ENCODE measurements at regions of chr12 and their contacts with region 1.

Region 1: GRCh38 chr12:79935021-79935623 is at the start of gene PPP1R12A:
- DNase-seq: peak; percentile 99
- ATAC-seq: peak; percentile 99
- H3K4me3 ChIP-seq: peak within 1 kb of the TSS; percentile 80 to 97
- H3K27ac ChIP-seq: peak within 1 kb of the TSS; percentile 91 to 96
- H3K4me1 ChIP-seq: peaks cover 0 to 2% of the 10 kb centered on the region in 2 donors
- H3K27me3 ChIP-seq: no peaks in the 10 kb centered on the region
- total RNA-seq, gene PPP1R12A: 194 to 287 TPM

Region 2: DNA sequence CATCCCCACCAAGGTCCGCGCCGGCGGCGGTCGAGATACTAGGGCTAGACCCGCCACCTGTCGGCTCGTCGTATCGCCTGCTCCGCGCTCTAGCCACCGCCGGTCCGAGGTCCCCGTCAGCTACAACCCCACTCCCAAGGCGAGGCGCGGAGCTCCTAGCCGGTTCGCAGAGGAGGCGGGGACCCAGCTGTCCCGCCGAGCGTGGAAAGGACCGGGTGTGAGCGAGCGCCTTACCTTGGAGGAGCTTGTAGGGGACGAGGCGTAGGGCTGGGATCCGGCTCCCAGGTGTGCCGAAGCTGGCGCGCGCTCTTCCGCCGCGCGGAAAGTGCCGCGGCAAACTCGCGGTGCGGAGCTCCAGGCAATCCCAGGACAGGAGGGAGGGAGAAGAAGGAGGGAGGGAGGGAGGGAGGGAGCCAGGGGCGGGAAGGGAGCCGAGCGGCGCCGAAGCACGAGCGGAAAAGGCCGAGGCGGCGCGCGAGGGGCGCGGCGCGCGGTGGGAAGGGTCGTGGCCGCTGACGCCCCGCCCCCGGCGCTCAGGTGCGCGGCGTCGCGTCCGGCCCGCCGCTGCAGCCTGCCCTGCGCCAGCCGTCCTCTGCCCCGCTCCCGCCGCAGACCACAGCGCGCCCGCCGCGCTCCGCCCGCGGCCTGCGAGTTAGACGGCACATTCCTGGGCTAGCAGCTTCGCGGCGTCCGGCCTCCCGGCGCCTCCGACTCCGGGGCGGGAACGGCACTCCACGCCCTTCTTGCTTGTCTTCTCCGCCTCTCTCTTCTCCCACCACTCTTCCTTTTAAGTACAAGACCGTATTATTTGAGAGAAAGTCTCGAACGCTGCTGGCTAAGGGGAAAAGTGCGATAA is 244.3 kb before region 1 on chr12 and contains the start of gene PAWR:
- intact Hi-C with region 1: loop called in 1 of 2 experiments (anchors 10 kb)
- DNase-seq: peak; percentile 73 to 90
- ATAC-seq: peak; percentile 88
- H3K4me3 ChIP-seq: peak within 1 kb of the TSS; percentile 96 to 99
- H3K27ac ChIP-seq: peak within 1 kb of the TSS; percentile 71 to 96
- H3K4me1 ChIP-seq: peaks cover 0 to 4% of the 10 kb centered on the region in 2 donors
- H3K27me3 ChIP-seq: no peaks in the 10 kb centered on the region
- total RNA-seq, gene PAWR: 110 to 150 TPM

Region 3: DNA sequence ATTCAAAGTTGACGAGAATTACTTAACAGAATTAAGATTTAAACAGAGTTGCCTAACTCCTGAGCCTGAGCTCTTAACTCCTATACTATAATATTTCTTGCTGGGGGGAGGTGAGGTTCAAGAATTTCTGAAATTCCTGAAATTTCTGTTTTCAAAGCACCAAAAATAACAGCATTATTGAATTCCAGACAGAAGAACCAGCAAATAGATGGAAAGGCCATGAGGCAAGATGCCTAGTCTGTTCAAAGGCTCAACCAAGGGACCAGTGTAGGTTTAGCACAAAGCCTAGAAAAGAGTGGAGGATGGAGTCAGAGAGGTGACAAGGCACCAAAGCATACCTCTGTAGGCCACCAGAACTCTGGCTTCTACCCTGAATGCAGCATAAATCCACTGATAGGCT is 76.6 kb before region 1 on chr12:
- intact Hi-C with region 1: no loop called
- DNase-seq: no peak
- ATAC-seq: no peak
- H3K4me3 ChIP-seq: no peak overlapping the region
- H3K27ac ChIP-seq: no peak overlapping the region
- H3K4me1 ChIP-seq: peaks cover 0 to 2% of the 10 kb centered on the region in 2 donors
- H3K27me3 ChIP-seq: no peaks in the 10 kb centered on the region

Region 4: GRCh38 chr12:79886917-79887519 is 48.1 kb before region 1 on chr12:
- intact Hi-C with region 1: loop called in 1 of 2 experiments (anchors 10 kb)
- DNase-seq: no peak
- ATAC-seq: peak; percentile 74
- H3K4me3 ChIP-seq: no peak overlapping the region
- H3K27ac ChIP-seq: no peak overlapping the region
- H3K4me1 ChIP-seq: peaks cover 8% of the 10 kb centered on the region in 2 donors
- H3K27me3 ChIP-seq: no peaks in the 10 kb centered on the region

Region 5: DNA sequence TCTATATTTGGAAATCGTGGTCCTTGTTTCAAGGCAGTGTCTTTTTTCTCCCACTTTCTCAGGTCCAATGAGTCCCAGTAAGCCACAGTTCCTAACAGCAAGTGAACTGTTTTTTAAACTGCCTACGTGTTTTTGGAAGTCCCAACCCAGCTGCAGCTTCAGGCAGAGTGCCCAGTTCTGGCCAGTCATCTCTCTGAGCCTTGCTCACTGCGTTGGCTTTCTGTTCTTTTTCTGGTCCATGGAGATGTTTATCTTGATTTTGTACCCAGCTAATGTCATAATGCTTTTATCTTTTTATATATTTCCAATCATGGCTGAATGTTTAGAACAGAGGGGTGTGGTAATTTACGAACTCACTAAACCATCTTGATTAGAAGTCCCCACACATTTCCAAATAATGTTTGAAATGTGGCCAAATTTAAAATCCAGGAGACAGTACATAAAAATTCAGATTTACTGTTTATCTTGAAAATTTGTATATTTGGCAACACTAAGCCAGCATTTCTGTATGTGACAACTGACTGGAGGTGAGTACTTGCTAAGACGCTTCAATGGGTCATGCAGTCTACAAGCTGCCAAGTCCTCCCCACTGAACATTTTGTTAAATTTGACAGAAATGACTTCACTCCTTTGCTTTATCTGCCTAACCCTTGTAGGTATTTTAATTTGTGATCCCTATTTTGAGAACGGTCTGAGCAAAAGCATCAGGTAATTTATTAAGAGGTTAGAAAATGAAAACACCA is 118.1 kb after region 1 on chr12:
- intact Hi-C with region 1: loop called (anchors 2 to 5 kb)
- DNase-seq: peak; percentile 91 to 93
- ATAC-seq: peak; percentile 86
- H3K4me3 ChIP-seq: peak overlapping the region in 1 of 2 donors; percentile 15
- H3K27ac ChIP-seq: peak overlapping the region in 1 of 2 donors; percentile 57
- H3K4me1 ChIP-seq: no peaks in the 10 kb centered on the region
- H3K27me3 ChIP-seq: no peaks in the 10 kb centered on the region

Region 6: DNA sequence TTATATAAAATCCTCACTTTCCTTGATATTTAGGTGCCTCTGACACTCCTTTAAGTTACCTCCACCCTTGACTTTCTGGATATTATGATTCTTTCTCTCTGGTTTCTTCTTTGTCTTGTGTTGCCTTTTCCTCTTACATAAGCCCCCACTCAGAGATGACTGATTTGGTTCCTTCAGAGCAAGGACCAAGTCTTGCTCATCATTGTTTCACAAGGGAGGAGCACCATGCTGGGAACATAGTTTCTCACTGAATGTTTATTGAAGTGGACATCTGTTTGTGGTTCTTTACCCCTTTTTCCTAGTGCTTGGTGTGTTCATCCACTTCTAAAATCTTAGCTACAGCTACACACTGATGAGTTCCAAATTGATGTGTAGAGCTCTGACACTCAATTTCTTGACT is 347.6 kb after region 1 on chr12:
- intact Hi-C with region 1: no loop called
- DNase-seq: no peak
- ATAC-seq: no peak
- H3K4me3 ChIP-seq: no peak overlapping the region
- H3K27ac ChIP-seq: no peak overlapping the region
- H3K4me1 ChIP-seq: no peaks in the 10 kb centered on the region
- H3K27me3 ChIP-seq: no peaks in the 10 kb centered on the region

Measured in aorta (tissue), 5 donors.